Activated CD4-positive, alpha-beta memory T cell treated with anti-CD3 and anti-CD28 coated beads, Interleukin-2, amount 10 ng/mL, durations not matched to agents 7 days and 5 days (primary cell): ENCODE measurements at regions of chr7 and their contacts with region 1.

Region 1: DNA sequence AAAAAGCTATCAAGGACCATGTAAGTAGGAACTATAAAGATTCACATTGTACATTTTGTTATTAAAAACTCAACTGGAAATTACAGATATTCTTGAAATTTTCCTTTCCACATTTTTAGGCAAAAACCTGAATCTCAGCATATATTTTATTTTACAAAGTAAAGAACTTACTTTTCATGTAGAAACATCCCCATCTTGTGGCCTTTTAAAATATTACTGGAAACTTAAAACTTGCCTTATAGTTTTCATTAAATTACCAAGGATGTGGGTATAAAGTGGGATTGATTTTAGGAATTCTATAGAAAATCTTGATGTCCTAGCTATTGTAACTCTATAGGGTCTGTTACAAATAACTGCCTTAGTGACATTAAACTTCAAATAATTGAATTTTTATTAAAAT is 10.6 kb downstream of the DBF4 start:
- DNase-seq: no peak
- H3K4me3 Mint-ChIP-seq: no peak overlapping the region
- H3K27ac Mint-ChIP-seq: no peak overlapping the region
- H3K4me1 Mint-ChIP-seq: peaks cover 18% of the 10 kb centered on the region
- H3K27me3 Mint-ChIP-seq: no peaks in the 10 kb centered on the region

Region 2: DNA sequence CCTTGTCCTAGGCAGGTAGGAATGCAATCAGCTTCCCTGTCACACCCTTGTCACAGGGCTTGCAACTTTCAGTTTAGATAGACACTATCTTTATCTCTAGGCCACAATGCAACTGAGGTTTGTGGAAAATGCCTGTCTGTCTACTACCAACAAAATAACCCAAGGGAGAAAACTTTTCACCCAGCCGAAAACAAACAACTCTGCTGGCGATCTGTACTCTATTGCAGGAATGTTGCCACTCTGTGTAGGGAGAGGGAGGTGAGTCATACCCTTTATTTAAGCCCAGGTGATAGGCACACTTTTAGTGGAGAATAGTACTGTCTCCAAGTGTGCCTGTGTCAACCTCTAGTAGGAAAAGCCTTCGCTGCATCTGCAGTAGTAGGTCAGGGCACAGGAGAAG is 119.1 kb before region 1 on chr7:
- CTCF ChIA-PET with region 1: no interaction called
- POLR2A ChIA-PET with region 1: no interaction called
- DNase-seq: no peak
- H3K4me3 Mint-ChIP-seq: no peak overlapping the region
- H3K27ac Mint-ChIP-seq: no peak overlapping the region
- H3K4me1 Mint-ChIP-seq: no peaks in the 10 kb centered on the region
- H3K27me3 Mint-ChIP-seq: peaks cover 4% of the 10 kb centered on the region

Region 3: GRCh38 chr7:87797798-87798403 is 89.0 kb before region 1 on chr7:
- CTCF ChIA-PET with region 1: interaction called, 13 read pairs
- POLR2A ChIA-PET with region 1: no interaction called
- DNase-seq: no peak
- H3K4me3 Mint-ChIP-seq: no peak overlapping the region
- H3K27ac Mint-ChIP-seq: no peak overlapping the region
- H3K4me1 Mint-ChIP-seq: no peaks in the 10 kb centered on the region
- H3K27me3 Mint-ChIP-seq: peaks cover 24% of the 10 kb centered on the region

Region 4: GRCh38 chr7:87933945-87934698 is 47.2 kb after region 1 on chr7 and contains the start of gene ADAM22:
- CTCF ChIA-PET with region 1: interaction called, 10 read pairs
- POLR2A ChIA-PET with region 1: no interaction called
- DNase-seq: peak; percentile 81
- H3K4me3 Mint-ChIP-seq: peak within 1 kb of the TSS; percentile 84
- H3K27ac Mint-ChIP-seq: no peak within 1 kb of the TSS
- H3K4me1 Mint-ChIP-seq: peaks cover 18% of the 10 kb centered on the region
- H3K27me3 Mint-ChIP-seq: peaks cover 29% of the 10 kb centered on the region
- total RNA-seq, gene ADAM22: 1.1 to 1.5 TPM

Region 5: GRCh38 chr7:88216276-88216675 is 329.4 kb after region 1 on chr7:
- CTCF ChIA-PET with region 1: no interaction called
- POLR2A ChIA-PET with region 1: no interaction called
- DNase-seq: no peak
- H3K4me3 Mint-ChIP-seq: no peak overlapping the region
- H3K27ac Mint-ChIP-seq: no peak overlapping the region
- H3K4me1 Mint-ChIP-seq: peaks cover 44% of the 10 kb centered on the region
- H3K27me3 Mint-ChIP-seq: no peaks in the 10 kb centered on the region